Right ventricle myocardium superior (tissue), 1 donor: ENCODE measurements at regions of chr7 and their contacts with region 1.

Region 1: DNA sequence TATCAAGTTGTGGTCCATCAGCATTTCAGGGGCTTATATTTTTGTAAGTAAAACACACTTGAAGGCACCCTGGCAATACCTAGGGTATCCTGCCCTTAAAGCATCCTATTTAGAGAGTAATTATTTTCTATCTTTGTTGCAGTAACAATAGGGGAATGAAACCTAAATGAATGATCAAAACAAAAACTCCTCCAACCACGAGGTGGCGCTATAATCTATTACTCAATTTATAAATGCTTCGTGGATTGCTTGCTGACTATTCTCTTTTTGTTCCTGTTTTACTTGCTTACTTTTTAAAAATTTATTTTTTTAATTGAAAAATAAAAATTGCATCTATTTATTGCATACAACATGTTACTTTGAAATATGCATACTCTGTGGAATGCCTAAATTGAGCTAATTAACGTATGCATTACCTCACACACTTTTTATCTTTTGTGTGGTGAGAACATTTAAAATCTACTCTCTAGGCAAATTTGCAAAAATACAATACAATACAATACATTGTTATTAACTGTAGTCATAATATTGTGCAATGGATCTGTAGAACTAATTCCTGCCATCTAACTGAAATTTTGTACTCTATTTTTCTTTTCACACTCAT is 147.7 kb upstream of the BMPER start:
- DNase-seq: no peak
- ATAC-seq: peak; percentile 42

Region 2: DNA sequence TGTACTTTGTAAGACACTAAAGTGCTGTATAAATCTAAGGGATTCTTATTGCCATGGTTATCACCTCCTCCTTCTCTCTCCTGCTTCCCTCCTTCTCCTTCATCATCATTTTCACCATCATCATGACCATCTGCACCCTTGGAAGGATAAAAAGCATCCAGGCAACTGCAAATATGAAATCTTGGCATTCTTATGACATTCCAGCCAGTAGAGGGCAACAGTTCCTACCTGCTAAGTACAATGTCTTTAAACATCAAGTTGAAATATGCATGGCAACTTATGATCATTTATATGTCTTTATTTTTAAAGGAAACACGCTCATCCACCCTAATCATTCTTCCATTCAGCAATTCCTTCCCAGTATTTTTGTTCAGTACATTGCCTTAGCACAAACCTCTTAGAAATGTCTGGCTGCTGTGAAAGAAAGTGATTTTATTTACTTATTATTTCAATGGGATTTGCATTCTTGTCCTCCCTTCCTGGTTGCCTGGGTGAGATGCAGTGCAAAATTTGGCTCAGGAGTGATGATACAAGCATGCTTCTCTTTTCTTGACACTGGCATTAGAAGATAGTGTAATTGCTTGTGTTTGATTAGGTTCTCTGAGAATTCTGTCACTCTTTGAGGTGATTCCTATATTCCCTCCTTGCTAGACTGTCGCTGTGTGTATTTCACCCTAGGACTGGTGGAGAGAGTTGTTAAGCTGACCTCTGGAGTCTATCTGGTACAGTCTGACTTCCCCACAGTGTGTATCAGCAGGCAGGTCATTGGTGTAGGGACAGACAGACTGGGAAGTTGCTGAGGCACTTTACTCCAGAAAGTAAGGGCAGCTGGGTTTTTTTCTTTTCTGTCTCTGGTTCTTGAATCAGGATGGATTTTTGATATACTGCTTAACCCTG is 40.8 kb before region 1 on chr7:
- intact Hi-C with region 1: no loop called
- DNase-seq: no peak
- ATAC-seq: no peak

Region 3: GRCh38 chr7:33895025-33895804 is 137.6 kb after region 1 on chr7:
- intact Hi-C with region 1: loop called (anchors 5 kb)
- DNase-seq: peak; percentile 92
- ATAC-seq: peak; percentile 98